PC-9 (cell line): ENCODE measurements at regions of chr4 and their contacts with region 1.

Region 1: DNA sequence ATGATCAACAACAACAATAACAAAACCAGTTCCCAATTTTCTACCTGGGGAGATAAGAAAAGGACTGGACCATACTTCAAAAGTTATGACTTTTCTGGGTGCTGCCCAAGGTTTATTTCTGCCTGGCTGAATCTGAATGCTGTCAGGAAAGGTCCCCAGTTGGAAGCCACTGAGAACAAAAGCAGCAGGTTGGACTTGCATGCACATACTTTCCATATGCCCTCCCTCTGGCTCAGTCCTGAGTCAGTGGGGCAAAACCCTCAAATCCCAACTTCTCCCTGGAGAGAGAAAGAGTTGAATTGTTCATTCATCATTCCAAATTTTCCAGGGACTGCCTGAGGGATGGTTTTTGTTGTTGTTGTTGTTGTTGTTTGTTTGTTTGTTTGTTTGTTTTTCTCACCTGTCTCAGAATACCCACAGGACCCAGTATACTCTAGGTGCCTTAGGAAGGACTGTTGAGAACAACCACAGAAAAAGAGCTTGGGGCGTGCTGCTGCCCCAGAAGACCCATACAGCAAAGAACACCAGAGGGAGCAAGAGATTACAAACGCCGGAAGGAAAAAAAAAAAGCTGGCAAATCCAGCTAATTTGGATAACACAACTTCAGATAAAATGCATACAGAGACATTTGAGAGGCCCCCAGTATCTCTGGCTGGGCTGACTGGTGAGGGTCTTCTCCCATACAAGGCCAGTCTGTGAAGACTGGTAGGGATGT is 138.9 kb upstream of the INPP4B start:
- DNase-seq: peak in 1 of 2 experiments; percentile 8
- H3K4me3 ChIP-seq: no peak overlapping the region
- H3K27ac ChIP-seq: no peak overlapping the region
- H3K4me1 ChIP-seq: no peaks in the 10 kb centered on the region
- H3K27me3 ChIP-seq: no peaks in the 10 kb centered on the region
- CTCF ChIP-seq: peak; percentile 57

Region 2: DNA sequence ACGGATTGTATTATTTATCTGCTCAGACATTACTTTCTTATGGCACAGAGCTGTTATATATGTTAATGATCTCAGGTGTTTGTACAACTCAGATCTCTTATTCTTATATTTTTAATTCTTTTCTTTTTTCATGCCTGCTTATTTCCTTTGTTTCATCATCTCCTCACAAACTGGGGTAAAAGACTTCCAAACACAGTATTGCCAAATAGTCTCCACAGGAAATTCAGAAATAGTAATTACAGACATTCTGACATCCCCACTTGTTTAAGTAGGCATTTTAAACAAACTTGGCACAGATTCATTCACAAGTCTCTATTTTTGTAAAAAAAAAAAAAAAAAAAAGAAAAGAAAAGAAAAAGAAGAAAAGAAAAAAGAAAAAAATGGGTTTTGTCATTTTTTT is 69.9 kb after region 1 on chr4:
- CTCF ChIA-PET with region 1: interaction called, 10 read pairs
- POLR2A ChIA-PET with region 1: no interaction called
- intact Hi-C with region 1: no loop called
- DNase-seq: no peak
- H3K4me3 ChIP-seq: no peak overlapping the region
- H3K27ac ChIP-seq: no peak overlapping the region
- H3K4me1 ChIP-seq: no peaks in the 10 kb centered on the region
- H3K27me3 ChIP-seq: no peaks in the 10 kb centered on the region
- CTCF ChIP-seq: no peak